Caco-2 (cell line): ENCODE measurements at regions of chr1 and their contacts with region 1.

Region 1: DNA sequence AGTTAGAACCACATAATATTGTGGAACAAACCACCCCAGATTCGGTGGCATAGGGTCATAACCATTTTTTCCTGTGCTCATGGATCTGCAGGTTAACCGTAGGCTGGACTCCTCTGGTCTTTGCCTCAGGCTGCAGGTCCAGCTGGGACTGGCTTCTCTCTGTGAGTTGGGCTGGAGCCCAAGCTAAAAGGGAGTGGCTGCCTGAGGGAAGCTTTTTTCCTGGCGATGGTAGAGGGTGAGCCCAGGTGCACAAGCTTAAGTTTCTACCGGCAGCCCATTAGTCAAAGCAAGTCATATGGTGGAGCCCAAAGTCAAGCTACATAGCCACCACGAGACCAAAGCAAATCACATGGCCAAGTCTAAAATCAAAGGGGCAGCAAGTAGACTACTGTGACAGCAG is 13.8 kb downstream of the EPHX4 start:
- DNase-seq: no peak
- H3K4me3 ChIP-seq: no peak overlapping the region
- H3K4me3 Mint-ChIP-seq: no peak overlapping the region
- H3K27ac Mint-ChIP-seq: no peak overlapping the region
- H3K4me1 ChIP-seq: peaks cover 7% of the 10 kb centered on the region; the same call in 1 of the 2 replicates
- H3K4me1 Mint-ChIP-seq: peaks cover under 1% of the 10 kb centered on the region
- H3K27me3 ChIP-seq: no peaks in the 10 kb centered on the region
- H3K27me3 Mint-ChIP-seq: no peaks in the 10 kb centered on the region
- CTCF ChIP-seq: no peak

Region 2: DNA sequence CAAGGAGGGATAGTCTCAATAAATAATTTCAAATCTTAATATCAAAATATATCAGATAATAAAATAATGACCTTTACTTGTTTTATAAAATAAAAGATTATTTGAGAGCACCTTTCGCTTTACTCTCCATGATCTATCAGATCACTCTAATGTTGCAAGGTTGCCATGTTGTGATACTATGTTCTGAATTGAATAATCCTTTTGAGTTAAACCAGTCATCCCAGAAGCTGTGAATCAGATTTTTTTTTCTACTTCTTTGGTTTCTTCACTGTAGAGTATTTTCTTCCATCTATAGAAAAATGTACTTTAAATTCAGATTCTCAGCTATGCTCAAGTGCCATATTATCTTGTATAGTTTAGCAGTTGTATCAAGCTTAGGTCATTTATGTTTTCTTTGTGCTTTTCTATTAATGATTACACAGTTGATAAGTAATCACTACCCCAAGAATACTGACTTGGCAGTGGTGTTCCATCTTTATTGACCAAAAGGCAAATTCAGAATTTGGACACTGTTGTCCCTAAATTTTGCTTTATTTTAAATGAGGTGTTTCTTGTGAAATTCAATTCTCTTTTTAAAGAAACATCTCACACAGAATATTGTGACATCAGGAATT is 61.5 kb before region 1 on chr1:
- CTCF ChIA-PET with region 1: no interaction called
- POLR2A ChIA-PET with region 1: no interaction called
- intact Hi-C with region 1: no loop called
- DNase-seq: no peak
- H3K4me3 ChIP-seq: no peak overlapping the region
- H3K4me3 Mint-ChIP-seq: no peak overlapping the region
- H3K27ac Mint-ChIP-seq: no peak overlapping the region
- H3K4me1 ChIP-seq: no peaks in the 10 kb centered on the region
- H3K4me1 Mint-ChIP-seq: no peaks in the 10 kb centered on the region
- H3K27me3 ChIP-seq: no peaks in the 10 kb centered on the region
- H3K27me3 Mint-ChIP-seq: no peaks in the 10 kb centered on the region
- CTCF ChIP-seq: no peak

Region 3: DNA sequence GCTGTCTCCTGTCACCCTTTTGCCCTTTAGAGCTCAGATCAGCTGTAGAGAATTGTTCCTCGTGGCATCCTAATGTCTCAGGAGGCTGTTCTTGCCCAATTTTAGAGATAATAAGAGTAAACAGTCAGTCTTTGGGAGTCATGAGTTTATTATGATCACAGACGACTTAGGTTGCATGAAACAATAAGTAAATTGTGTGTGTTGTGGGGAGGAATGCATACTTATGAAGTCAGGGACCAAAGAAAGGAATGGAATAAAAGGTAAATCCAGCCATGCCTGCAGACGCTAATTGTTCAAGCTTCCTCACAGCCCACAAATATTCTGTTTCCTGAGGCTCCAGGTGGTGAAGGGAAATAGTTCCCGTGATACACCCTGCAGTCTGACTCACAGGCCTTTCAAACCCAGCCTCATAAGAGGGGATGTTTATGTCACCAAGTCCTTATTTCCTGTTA is 12.9 kb before region 1 on chr1:
- CTCF ChIA-PET with region 1: no interaction called
- POLR2A ChIA-PET with region 1: no interaction called
- intact Hi-C with region 1: loop called (anchors 1 kb)
- DNase-seq: no peak
- H3K4me3 ChIP-seq: peak overlapping the region; percentile 62; the same call in 1 of the 2 replicates
- H3K4me3 Mint-ChIP-seq: peak overlapping the region; percentile 74
- H3K27ac Mint-ChIP-seq: no peak overlapping the region
- H3K4me1 ChIP-seq: peaks cover 4% of the 10 kb centered on the region; the same call in 1 of the 2 replicates
- H3K4me1 Mint-ChIP-seq: no peaks in the 10 kb centered on the region
- H3K27me3 ChIP-seq: no peaks in the 10 kb centered on the region
- H3K27me3 Mint-ChIP-seq: no peaks in the 10 kb centered on the region
- CTCF ChIP-seq: no peak

Region 4: DNA sequence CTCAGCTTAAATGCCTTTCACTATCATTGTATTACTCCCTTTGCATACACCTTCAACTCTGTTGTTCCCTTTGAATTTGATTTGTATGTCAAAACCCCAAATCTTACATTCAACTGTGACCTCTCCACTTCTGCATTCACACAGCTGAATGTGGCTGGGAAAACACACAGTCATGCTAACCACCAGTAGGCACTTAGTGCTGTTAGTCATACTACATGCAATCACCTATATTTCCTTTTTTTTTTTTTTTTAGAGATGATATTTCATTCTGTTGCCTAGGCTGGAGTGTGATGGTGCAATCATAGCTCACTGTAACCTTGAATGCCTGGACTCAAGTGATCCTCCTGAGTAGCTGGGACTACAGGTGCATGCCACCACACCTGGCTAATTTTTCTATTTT is 52.7 kb after region 1 on chr1:
- CTCF ChIA-PET with region 1: no interaction called
- POLR2A ChIA-PET with region 1: interaction called, 12 read pairs
- intact Hi-C with region 1: no loop called
- DNase-seq: no peak
- H3K4me3 ChIP-seq: no peak overlapping the region
- H3K4me3 Mint-ChIP-seq: no peak overlapping the region
- H3K27ac Mint-ChIP-seq: no peak overlapping the region
- H3K4me1 ChIP-seq: no peaks in the 10 kb centered on the region
- H3K4me1 Mint-ChIP-seq: peaks cover 6% of the 10 kb centered on the region
- H3K27me3 ChIP-seq: no peaks in the 10 kb centered on the region
- H3K27me3 Mint-ChIP-seq: no peaks in the 10 kb centered on the region
- CTCF ChIP-seq: no peak